ENCODE measurements at regions of chr7 and their contacts with region 1.

Region 1: GRCh38 chr7:32204361-32205018 is 134.3 kb upstream of the PDE1C start:
- DNase-seq: peak; percentile 56 to 81 (median 77)
- H3K4me3 ChIP-seq: peak overlapping the region in 1 of 7 experiments; percentile 16
- H3K27ac ChIP-seq: no peak overlapping the region
- H3K4me1 ChIP-seq: no peaks in the 10 kb centered on the region
- H3K27me3 ChIP-seq: no peaks in the 10 kb centered on the region

Region 2: DNA sequence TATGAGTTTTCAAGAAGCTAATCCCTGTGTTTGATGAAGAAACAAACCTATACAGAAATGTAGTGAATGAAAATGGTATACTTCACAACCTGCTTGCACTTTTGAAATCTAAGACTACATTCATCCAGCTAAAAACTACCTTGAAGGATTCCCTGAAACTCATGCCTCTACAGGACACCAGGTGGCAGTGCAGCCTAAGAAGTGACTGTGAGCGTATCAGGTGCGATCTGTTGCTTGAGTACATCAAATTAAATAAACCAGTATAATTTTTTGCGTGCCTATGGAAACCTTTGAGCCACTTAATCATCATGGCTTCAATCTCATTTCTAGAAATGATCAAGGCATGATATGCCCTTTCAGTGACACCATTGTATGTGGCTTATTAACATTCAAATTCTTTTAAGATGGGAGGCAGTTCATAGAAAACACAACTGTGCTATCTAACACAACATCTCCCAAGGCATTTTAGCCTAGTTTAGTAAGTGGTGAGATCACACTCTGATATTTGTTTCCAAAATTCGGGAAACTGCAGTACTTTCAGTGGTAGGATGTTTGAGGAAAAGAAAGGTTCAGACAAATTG is 460.1 kb before region 1 on chr7:
- CTCF ChIA-PET with region 1: interaction called, 84 read pairs
- POLR2A ChIA-PET with region 1: no interaction called
- DNase-seq: peak; percentile 67 to 87 (median 83)
- H3K4me3 ChIP-seq: no peak overlapping the region
- H3K27ac ChIP-seq: no peak overlapping the region
- H3K4me1 ChIP-seq: no peaks in the 10 kb centered on the region
- H3K27me3 ChIP-seq: peaks cover 0 to 15% (median 0%) of the 10 kb centered on the region in 5 experiments

Region 3: GRCh38 chr7:31860922-31861321 is 343.6 kb before region 1 on chr7:
- CTCF ChIA-PET with region 1: no interaction called
- POLR2A ChIA-PET with region 1: no interaction called
- DNase-seq: no peak
- H3K4me3 ChIP-seq: no peak overlapping the region
- H3K27ac ChIP-seq: no peak overlapping the region
- H3K4me1 ChIP-seq: no peaks in the 10 kb centered on the region
- H3K27me3 ChIP-seq: no peaks in the 10 kb centered on the region

Region 4: GRCh38 chr7:32250471-32251260 is 46.2 kb after region 1 on chr7:
- CTCF ChIA-PET with region 1: interaction called, 13 read pairs
- POLR2A ChIA-PET with region 1: no interaction called
- DNase-seq: peak; percentile 50 to 89 (median 80)
- H3K4me3 ChIP-seq: peak overlapping the region in 4 of 7 experiments; percentile 2 to 29 (median 10)
- H3K27ac ChIP-seq: no peak overlapping the region
- H3K4me1 ChIP-seq: peaks cover 0 to 19% (median 15%) of the 10 kb centered on the region in 4 experiments
- H3K27me3 ChIP-seq: no peaks in the 10 kb centered on the region

Region 5: GRCh38 chr7:32357535-32358277 is 153.2 kb after region 1 on chr7:
- CTCF ChIA-PET with region 1: interaction called, 82 read pairs
- POLR2A ChIA-PET with region 1: no interaction called
- DNase-seq: peak; percentile 42 to 78 (median 72)
- H3K4me3 ChIP-seq: no peak overlapping the region
- H3K27ac ChIP-seq: no peak overlapping the region
- H3K4me1 ChIP-seq: no peaks in the 10 kb centered on the region
- H3K27me3 ChIP-seq: peaks cover 0 to 9% (median 3%) of the 10 kb centered on the region in 5 experiments

Measured in common myeloid progenitor, CD34-positive (primary cell).